AG04450 (cell line): ENCODE measurements at regions of chr16 and their contacts with region 1.

Region 1: DNA sequence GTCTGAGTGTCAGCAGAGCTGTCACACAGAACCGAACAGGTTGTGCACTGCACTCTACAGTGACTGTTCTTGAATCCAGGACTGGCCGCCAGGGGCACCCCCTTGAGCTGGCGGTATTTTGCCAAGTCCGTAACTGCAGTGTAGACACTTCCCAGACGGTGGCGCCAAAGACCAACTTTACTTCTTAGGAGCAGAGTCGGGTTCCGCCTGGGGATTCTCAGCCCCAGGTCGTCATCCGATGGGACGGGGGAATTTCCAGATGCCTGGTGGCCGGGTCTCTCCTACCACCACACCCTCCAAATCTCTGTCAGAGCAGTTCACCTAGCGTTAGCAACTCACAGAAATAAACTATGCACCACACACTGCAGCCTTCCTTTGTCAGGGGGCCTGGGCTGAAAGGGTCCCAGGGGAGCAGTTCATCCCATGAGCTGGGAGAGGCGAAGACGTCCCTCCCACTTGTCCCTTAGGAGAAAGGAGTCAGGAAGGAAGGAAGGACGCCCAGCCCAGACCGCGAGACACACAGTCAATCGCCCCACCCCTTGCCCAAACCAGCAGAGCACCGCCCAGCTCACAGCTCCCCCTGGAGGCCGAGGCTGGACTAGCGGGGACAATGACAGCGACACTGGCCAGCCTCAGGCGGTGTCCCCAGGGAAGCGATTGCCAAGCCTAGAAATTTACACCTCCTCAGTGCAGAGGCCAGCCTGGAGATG is 7.4 kb upstream of the RIPOR1 start:
- DNase-seq: peak; percentile 85
- H3K4me3 ChIP-seq: peak overlapping the region; percentile 72
- H3K27ac ChIP-seq: peak overlapping the region; percentile 99
- H3K27me3 ChIP-seq: no peaks in the 10 kb centered on the region
- CTCF ChIP-seq: peak; percentile 98

Region 2: GRCh38 chr16:66315210-66315825 is 1205.9 kb before region 1 on chr16:
- CTCF ChIA-PET with region 1: no interaction called
- POLR2A ChIA-PET with region 1: no interaction called
- DNase-seq: peak; percentile 49
- H3K4me3 ChIP-seq: no peak overlapping the region
- H3K27ac ChIP-seq: no peak overlapping the region
- H3K27me3 ChIP-seq: peaks cover 14% of the 10 kb centered on the region
- CTCF ChIP-seq: peak; percentile 99

Region 3: GRCh38 chr16:66786551-66786950 is 734.7 kb before region 1 on chr16:
- CTCF ChIA-PET with region 1: no interaction called
- POLR2A ChIA-PET with region 1: no interaction called
- DNase-seq: no peak
- H3K4me3 ChIP-seq: no peak overlapping the region
- H3K27ac ChIP-seq: no peak overlapping the region
- H3K27me3 ChIP-seq: peaks cover 6% of the 10 kb centered on the region
- CTCF ChIP-seq: no peak

Region 4: GRCh38 chr16:67454104-67454503 is 67.1 kb before region 1 on chr16:
- CTCF ChIA-PET with region 1: no interaction called
- POLR2A ChIA-PET with region 1: no interaction called
- DNase-seq: no peak
- H3K4me3 ChIP-seq: no peak overlapping the region
- H3K27ac ChIP-seq: no peak overlapping the region
- H3K27me3 ChIP-seq: no peaks in the 10 kb centered on the region
- CTCF ChIP-seq: no peak

Region 5: DNA sequence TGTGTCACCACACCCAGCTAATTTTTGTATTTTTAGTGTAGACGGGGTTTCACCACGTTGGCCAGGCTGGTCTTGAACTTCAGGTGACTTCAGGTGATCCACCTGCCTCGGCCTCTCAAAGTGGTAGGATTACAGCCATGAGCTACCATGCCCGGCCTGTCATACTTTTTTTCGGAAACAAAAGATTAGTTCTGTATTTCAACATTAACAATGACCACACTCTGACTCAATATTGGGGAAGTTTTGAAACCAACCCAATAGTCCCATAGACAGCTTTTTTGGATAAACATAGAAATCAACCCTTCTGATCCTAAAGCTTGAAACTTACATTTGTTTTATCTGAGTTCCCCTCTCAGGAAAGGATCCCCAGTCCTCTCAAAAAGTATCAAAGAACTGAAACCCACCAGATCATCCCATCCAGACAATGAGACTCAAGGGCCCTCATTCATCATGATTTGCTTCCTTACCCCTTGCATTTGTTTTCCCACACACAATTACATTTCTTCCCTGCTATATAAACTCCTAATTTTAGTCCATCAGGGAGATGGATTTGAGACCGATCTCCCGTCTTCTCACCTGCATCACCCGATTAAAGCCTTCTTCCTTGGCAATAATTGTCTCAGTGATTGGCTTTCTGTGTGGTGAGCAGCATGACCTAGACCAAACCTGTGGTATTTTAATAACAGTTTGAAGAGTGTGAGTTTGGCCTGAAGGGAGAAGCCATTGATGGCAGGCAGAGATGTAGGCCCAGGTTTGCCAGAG is 30.7 kb before region 1 on chr16:
- CTCF ChIA-PET with region 1: interaction called, 41 read pairs
- POLR2A ChIA-PET with region 1: interaction called, 4 read pairs
- DNase-seq: no peak
- H3K4me3 ChIP-seq: no peak overlapping the region
- H3K27ac ChIP-seq: no peak overlapping the region
- H3K27me3 ChIP-seq: no peaks in the 10 kb centered on the region
- CTCF ChIP-seq: no peak

Region 6: GRCh38 chr16:67561824-67562525 is 40.7 kb after region 1 on chr16:
- CTCF ChIA-PET with region 1: interaction called, 15 read pairs
- POLR2A ChIA-PET with region 1: interaction called, 7 read pairs
- DNase-seq: peak; percentile 91
- H3K4me3 ChIP-seq: peak overlapping the region; percentile 72
- H3K27ac ChIP-seq: peak overlapping the region; percentile 75
- H3K27me3 ChIP-seq: no peaks in the 10 kb centered on the region
- CTCF ChIP-seq: no peak

Region 7: DNA sequence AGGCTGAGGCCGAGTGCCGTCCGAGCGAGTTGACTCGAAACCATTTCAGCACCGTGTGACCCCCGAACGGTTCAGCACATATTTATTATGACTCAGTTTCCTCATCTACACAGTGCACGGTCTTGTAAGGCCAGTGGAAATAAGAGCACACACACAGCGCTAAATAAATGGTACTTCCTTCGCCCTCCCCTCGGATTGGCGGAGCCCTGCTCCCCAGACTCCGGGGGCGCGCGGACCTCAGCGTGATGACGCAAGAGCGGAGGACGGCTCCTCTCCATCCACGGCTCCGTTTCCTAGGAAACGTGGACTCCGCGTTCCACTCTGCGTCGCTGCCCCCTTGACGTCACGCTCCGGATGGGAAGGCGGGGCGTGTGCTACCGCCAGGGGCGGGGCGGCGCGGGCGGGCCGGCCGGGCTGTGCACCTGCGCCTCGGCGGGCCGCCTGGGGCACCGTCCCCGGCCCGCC is 139.3 kb after region 1 on chr16 and contains the start of gene PARD6A:
- CTCF ChIA-PET with region 1: interaction called, 181 read pairs
- POLR2A ChIA-PET with region 1: interaction called, 6 read pairs
- DNase-seq: peak; percentile 91
- H3K4me3 ChIP-seq: peak within 1 kb of the TSS; percentile 92
- H3K27ac ChIP-seq: peak within 1 kb of the TSS; percentile 91
- H3K27me3 ChIP-seq: no peaks in the 10 kb centered on the region
- CTCF ChIP-seq: no peak
- polyA plus RNA-seq, gene PARD6A: 0.42 and 0.53 TPM in 2 replicates

Region 8: DNA sequence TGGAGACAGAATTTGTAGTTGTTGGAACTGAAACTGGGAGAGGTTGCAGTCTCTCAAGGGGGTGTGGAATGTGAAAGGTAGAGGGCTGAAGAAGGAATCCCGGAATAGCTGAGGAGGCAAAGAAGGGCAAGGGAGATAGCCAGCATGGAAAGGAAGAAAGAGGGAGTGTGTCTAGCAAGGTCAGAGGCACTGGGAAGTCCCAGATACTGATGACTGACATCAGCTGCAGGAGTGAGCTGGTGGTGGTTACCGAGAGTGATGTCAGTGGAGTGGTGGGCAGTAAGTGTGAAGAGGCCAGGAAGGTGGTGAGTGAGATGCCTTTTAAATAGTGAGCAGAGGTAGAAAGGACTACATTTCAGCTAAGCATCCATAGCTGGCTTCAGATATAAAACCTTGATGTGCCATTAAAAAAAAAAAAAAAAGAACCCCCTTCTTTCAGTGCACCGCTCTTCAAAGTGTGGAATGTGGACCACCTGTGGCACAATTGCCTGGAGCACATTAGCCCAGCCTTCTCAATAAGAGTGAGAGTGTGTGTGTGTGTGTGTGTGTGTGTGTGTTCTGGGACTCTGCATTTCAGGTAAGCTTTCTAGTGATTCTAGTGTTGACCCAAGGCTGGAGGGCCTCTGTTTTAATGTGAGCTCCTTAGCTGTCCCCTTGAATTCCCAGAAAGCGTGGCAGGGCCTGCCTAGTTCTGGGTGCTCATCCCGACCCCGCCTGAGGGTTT is 798.1 kb after region 1 on chr16:
- CTCF ChIA-PET with region 1: interaction called, 10 read pairs
- POLR2A ChIA-PET with region 1: no interaction called
- DNase-seq: no peak
- H3K4me3 ChIP-seq: no peak overlapping the region
- H3K27ac ChIP-seq: no peak overlapping the region
- H3K27me3 ChIP-seq: no peaks in the 10 kb centered on the region
- CTCF ChIP-seq: no peak

Region 9: GRCh38 chr16:68724797-68725196 is 1203.5 kb after region 1 on chr16:
- CTCF ChIA-PET with region 1: no interaction called
- POLR2A ChIA-PET with region 1: no interaction called
- DNase-seq: no peak
- H3K4me3 ChIP-seq: no peak overlapping the region
- H3K27ac ChIP-seq: no peak overlapping the region
- H3K27me3 ChIP-seq: no peaks in the 10 kb centered on the region
- CTCF ChIP-seq: no peak